ENCODE measurements at regions of chr7 and their contacts with region 1.

Region 1: DNA sequence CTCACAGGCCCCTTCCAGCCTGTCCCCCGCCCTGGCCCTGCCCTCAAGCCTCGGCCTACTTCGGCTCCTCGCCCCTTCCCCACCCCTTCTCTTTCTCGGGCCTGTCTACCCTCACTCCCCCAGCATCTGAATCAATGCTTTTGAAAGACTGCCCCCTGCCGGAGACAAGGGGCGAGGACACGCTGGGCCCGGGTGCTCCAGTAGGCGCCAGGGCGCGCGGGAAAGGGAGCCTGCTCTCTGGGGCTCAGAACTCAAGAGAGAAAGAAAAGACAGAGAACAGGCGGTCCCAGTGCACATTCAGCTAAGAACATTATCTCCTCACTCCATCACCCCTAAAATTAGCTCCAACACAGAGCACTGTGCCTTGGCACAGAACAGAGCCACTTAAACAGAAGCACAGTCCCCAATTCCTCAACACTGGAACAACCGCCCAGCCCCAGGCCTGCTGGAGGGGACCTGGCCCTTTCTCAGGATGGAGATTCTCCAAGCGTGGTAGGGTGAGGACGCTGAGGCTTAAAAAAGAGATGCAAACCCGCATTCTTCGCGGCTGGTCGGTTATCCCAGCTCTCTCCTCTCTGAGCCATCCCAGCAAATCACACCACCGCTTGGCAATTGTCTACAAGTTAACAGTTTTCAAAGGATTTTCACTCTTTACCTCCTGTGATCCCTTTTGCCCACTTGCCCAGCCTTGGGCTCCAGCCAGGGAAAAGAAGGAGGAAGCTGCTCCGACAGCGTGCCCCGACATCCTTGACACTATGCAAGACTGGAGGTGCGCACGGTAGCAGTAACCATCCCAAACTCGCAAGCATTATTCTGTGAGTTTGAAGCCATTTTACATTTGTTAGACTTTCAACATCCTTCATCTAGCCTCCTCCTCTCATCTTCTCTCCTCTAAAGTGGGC is 2.1 kb downstream of the GIGYF1 start:
- DNase-seq: peak; percentile 61
- ATAC-seq: peak; percentile 70
- H3K4me3 ChIP-seq: peak overlapping the region; percentile 6; the same call in 1 of the 2 replicates
- H3K27ac ChIP-seq: no peak overlapping the region
- H3K4me1 ChIP-seq: peaks cover 20% of the 10 kb centered on the region
- H3K27me3 ChIP-seq: no peaks in the 10 kb centered on the region
- CTCF ChIP-seq: peak; percentile 84
- POLR2A ChIP-seq: no peak
- RAD21 ChIP-seq: peak; percentile 75

Region 2: DNA sequence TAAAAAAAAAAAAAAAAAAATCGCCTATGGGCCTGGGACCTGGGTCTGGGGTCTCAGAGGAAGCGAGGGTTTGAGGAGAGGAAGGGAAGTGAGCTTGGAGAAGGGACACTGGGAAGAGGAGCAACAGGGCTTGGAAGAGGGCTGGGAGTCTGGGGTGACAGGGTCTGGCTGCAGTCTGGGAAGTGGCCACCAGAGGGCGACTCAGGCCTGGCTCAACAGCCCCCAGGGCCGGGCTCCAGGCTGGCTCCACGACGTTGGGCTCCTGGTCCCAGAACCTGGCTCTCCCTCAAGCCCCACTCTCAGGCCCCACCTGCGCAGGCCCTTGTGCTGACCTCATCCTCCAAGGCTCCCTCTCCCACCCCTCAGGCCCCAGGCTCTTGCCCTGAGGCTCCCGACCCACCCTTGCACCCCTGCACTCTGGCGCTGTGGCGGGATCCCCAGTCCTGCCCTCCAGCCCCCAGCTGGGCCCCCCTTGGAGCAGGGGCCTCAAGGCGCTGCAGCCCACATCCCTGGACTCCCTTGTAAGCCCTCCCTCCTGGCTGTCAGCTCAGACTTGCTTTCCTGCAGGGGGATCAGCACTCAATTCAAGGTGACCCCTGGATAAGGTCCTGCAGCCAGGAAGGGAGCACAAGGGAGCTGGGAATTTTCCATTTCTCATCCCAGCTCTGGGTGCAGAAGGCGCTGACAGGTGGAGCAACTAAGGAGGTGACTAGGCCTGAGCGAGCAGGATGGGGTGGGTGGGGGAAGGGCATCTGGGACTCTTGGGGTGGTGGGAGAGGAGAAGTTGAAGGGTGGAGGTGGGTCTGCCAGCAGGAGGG is 222.5 kb before region 1 on chr7:
- CTCF ChIA-PET with region 1: no interaction called
- POLR2A ChIA-PET with region 1: no interaction called
- dilution Hi-C with region 1: no loop called
- in situ Hi-C with region 1: loop called (anchors 10 kb)
- intact Hi-C with region 1: loop called (anchors 2 kb)
- DNase-seq: peak; percentile 64
- ATAC-seq: peak; percentile 82
- H3K4me3 ChIP-seq: no peak overlapping the region
- H3K27ac ChIP-seq: no peak overlapping the region
- H3K4me1 ChIP-seq: peaks cover 7% of the 10 kb centered on the region
- H3K27me3 ChIP-seq: no peaks in the 10 kb centered on the region
- CTCF ChIP-seq: peak; percentile 96
- POLR2A ChIP-seq: no peak
- RAD21 ChIP-seq: peak; percentile 96

Region 3: DNA sequence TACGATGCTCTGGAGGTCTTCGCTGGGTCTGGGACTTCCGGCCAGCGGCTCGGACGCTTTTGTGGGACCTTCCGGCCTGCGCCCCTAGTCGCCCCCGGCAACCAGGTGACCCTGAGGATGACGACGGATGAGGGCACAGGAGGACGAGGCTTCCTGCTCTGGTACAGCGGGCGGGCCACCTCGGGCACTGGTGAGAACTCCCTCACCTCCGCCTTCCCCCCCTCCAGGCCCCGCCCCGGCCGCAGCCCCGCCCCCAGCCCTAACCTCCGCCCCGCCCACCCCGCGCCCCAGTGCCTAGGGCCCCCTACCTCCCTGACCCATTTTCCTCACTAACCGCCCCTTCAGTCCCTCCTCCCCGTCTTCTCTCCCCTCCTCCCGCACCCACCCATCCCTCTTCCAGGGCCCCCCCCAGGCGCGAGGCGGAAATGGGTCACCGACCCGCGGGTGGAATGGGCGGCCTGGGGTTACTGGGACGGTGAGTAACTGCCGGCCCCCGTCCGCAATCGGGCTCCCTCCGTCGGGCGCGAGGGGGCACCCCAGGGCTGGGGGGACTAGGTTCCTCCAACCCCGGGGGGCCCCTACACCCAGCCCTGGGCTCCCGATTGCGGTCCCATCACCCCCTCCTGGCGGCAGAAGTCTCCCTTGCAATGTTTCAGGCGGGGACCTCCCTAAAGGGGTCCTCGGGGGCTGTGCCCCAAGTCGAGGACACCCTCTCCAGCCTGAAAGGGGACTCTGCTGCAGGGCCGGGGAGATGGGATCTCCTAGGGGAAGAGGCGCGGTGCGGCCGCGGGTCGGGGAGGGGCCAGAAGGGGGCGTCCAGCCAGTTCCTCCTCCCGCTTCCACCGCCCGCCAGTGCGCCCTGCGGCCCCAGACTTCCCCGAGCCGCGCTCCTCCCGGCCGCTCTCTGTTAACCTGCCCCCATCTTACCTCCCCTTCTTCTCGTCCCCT is 87.6 kb before region 1 on chr7:
- CTCF ChIA-PET with region 1: interaction called, 4 read pairs
- POLR2A ChIA-PET with region 1: interaction called, 4 read pairs
- dilution Hi-C with region 1: no loop called
- in situ Hi-C with region 1: no loop called
- intact Hi-C with region 1: loop called (anchors 5 kb)
- DNase-seq: peak; percentile 46
- ATAC-seq: peak; percentile 54
- H3K4me3 ChIP-seq: peak overlapping the region; percentile 69
- H3K27ac ChIP-seq: peak overlapping the region; percentile 99
- H3K4me1 ChIP-seq: peaks cover 9% of the 10 kb centered on the region
- H3K27me3 ChIP-seq: no peaks in the 10 kb centered on the region
- CTCF ChIP-seq: peak; percentile 36
- POLR2A ChIP-seq: no peak
- RAD21 ChIP-seq: peak; percentile 18; the same call in 1 of the 2 replicates

Measured in IMR-90 (cell line).